ENCODE measurements at regions of chr1 and their contacts with region 1.

Region 1: DNA sequence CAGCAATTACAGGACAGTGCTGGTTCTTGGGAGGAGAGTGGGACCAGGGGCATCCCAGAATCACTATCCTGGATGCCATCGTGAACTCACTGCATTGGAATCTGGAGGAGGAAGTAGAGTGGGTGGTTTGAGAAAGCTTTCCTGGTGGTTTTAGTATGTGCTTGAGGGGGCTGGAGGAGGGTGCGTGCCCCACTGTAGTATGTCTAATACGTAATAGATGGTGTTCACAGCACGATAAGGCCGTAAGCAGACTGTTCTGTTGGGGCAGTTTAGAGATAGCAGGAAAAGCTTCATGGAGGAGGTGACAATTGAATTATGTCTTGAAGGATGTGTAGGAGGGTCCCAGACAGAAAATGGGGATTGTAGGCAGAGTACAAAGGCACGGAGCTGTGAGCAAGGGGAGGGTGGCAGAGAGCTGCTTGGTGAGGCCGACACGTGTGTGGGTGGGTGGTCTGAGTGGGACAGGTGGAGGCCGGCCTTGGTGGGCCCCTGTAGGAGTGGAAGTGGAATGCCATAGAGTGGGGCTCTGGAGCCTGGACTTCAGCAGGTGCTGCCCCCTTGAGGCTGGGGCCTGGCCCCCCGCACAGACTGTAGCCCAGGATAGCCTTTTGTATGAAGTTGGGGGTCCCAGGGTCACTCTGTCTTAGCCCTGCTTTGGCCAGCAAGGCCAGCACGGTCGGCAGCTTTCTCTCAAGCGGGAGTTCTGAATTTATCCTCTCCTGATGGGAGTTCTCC is 37.0 kb downstream of the IL6R start:
- DNase-seq: no peak
- ATAC-seq: no peak
- H3K4me3 ChIP-seq: peak overlapping the region; percentile 36
- H3K4me3 Mint-ChIP-seq: peak overlapping the region in 9 of 10 donors; percentile 69 to 87 (median 76)
- H3K27ac ChIP-seq: peak overlapping the region; percentile 78
- H3K27ac Mint-ChIP-seq: peak overlapping the region in 8 of 9 donors; percentile 91 to 99 (median 96)
- H3K4me1 ChIP-seq: peaks cover 11 to 69% of the 10 kb centered on the region in 2 donors
- H3K4me1 Mint-ChIP-seq: peaks cover 55 to 82% (median 73%) of the 10 kb centered on the region in 7 donors
- H3K27me3 ChIP-seq: no peaks in the 10 kb centered on the region
- H3K27me3 Mint-ChIP-seq: no peaks in the 10 kb centered on the region

Region 2: DNA sequence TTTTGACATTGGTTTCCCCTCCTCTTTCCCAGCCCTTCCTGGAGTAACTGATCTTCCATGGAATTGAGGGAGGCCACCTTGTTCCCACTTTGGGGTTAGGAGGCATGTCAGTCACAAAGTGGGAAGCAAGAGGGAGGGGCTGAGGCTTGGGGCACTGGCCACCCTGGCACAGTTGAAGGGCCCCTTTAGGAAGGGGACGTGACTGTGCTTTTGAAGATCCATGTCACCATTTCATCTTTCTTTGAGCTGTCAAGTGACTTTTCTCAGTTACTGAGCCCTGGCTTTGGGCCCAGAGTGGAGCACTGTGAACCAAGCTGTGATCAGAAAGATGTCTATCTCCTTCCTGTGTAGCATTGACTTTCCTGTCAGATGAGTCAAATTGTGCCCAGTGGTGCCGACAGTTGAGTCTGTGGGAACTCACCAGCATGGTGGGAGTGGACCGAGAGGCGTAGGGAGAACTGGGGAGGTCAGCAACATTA is 21.4 kb after region 1 on chr1:
- CTCF ChIA-PET with region 1: interaction called, 8 read pairs
- POLR2A ChIA-PET with region 1: interaction called, 8 read pairs
- intact Hi-C with region 1: loop called (anchors 1 to 2 kb)
- DNase-seq: peak in 8 of 9 donors; percentile 50 to 79 (median 70)
- ATAC-seq: peak; percentile 82
- H3K4me3 ChIP-seq: no peak overlapping the region
- H3K4me3 Mint-ChIP-seq: peak overlapping the region; percentile 58 to 96 (median 80)
- H3K27ac ChIP-seq: peak overlapping the region; percentile 78
- H3K27ac Mint-ChIP-seq: peak overlapping the region; percentile 86 to 96 (median 94)
- H3K4me1 ChIP-seq: peaks cover 38 to 78% of the 10 kb centered on the region in 2 donors
- H3K4me1 Mint-ChIP-seq: peaks cover 58 to 94% (median 81%) of the 10 kb centered on the region in 7 donors
- H3K27me3 ChIP-seq: no peaks in the 10 kb centered on the region
- H3K27me3 Mint-ChIP-seq: no peaks in the 10 kb centered on the region

Region 3: GRCh38 chr1:154574716-154575115 is 132.5 kb after region 1 on chr1:
- CTCF ChIA-PET with region 1: no interaction called
- POLR2A ChIA-PET with region 1: no interaction called
- intact Hi-C with region 1: no loop called
- DNase-seq: no peak
- ATAC-seq: no peak
- H3K4me3 ChIP-seq: no peak overlapping the region
- H3K4me3 Mint-ChIP-seq: no peak overlapping the region
- H3K27ac ChIP-seq: no peak overlapping the region
- H3K27ac Mint-ChIP-seq: peak overlapping the region in 2 of 9 donors; percentile 16 to 54
- H3K4me1 ChIP-seq: no peaks in the 10 kb centered on the region
- H3K4me1 Mint-ChIP-seq: peaks cover 0 to 16% (median 0%) of the 10 kb centered on the region in 7 donors
- H3K27me3 ChIP-seq: no peaks in the 10 kb centered on the region
- H3K27me3 Mint-ChIP-seq: peaks cover 0 to 9% (median 4%) of the 10 kb centered on the region in 5 donors

Measured in naive thymus-derived CD4-positive, alpha-beta T cell (primary cell).